K562 (cell line): ENCODE measurements at regions of chr19 and their contacts with region 1.

Region 1: GRCh38 chr19:52962394-52963246 is at the start of gene ZNF816:
- DNase-seq: peak; percentile 98
- ATAC-seq: peak; percentile 100
- H3K4me3 ChIP-seq: peak within 1 kb of the TSS; percentile 63
- H3K27ac ChIP-seq: peak within 1 kb of the TSS; percentile 61
- H3K4me1 ChIP-seq: peaks cover 7 to 13% of the 10 kb centered on the region in 2 experiments
- H3K27me3 ChIP-seq: no peaks in the 10 kb centered on the region
- CTCF ChIP-seq: no peak
- EP300 ChIP-seq: no peak
- POLR2A ChIP-seq: peak; percentile 86
- RAD21 ChIP-seq: no peak
- polyA plus RNA-seq, gene ZNF816: 11.1 to 17.0 TPM

Region 2: DNA sequence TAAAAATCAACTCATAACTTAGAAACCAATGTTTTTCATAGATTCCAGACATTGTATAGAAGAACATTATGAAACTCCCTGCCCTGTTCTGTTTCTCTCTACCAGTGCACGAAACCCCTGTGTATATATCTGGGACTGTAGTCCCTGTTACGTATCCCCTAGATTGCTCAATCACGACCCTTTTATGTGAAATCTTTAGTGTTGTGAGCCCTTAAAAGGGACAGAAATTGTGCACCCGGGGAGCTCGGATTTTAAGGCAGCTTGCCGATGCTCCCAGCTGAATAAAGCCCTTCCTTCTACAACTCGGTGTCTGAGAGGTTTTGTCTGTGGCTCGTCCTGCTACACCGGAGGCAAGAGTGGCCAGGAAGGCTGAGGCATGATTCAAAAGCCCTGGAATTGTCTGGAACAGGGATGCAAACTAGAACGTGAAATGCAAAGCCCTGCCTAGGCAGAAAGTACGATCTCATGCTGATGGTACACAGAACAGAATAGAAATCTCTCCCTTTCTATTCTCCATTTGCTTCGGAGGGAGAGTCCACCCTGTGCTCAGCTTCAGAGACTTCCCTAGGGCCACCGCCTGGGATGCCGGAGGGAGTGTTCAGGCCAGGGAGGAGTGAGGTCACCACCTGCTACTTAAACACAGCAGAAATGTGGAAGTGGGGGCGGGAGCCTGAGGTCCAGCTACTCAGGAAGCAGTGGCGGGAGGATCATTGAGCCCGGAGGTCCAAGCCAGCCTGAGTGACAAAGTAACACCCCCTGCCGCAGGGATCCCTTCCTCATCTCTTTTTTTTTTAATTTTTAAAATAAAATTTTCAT is 38.6 kb before region 1 on chr19:
- CTCF ChIA-PET with region 1: no interaction called
- POLR2A ChIA-PET with region 1: no interaction called
- in situ Hi-C with region 1: no loop called
- intact Hi-C with region 1: loop called (anchors 2 kb)
- DNase-seq: peak; percentile 37 to 89 (median 44)
- ATAC-seq: peak; percentile 75
- H3K4me3 ChIP-seq: peak overlapping the region; percentile 66; the same call in 1 of the 2 replicates
- H3K27ac ChIP-seq: peak overlapping the region; percentile 98
- H3K4me1 ChIP-seq: peaks cover 11 to 13% of the 10 kb centered on the region in 2 experiments; a peak in 3 of 5 replicates
- H3K27me3 ChIP-seq: no peaks in the 10 kb centered on the region
- CTCF ChIP-seq: 0 out of 6 replicates have a peak, but pooled peaks of 1 of the 3 experiments have one; percentile 1
- EP300 ChIP-seq: no peak
- POLR2A ChIP-seq: peak; percentile 47; the same call in 1 of the 2 replicates
- RAD21 ChIP-seq: peak in 1 of 2 experiments; percentile 12; a peak in 1 of 4 replicates

Region 3: GRCh38 chr19:52948025-52948770 is 14.4 kb before region 1 on chr19:
- CTCF ChIA-PET with region 1: no interaction called
- POLR2A ChIA-PET with region 1: no interaction called
- in situ Hi-C with region 1: no loop called
- intact Hi-C with region 1: no loop called
- DNase-seq: no peak
- ATAC-seq: no peak
- H3K4me3 ChIP-seq: no peak overlapping the region
- H3K27ac ChIP-seq: no peak overlapping the region
- H3K4me1 ChIP-seq: 0 out of 5 replicates have a peak, but pooled peaks cover 0 to 4% of the 10 kb centered on the region in 2 experiments
- H3K27me3 ChIP-seq: no peaks in the 10 kb centered on the region
- CTCF ChIP-seq: no peak
- EP300 ChIP-seq: no peak
- POLR2A ChIP-seq: no peak
- RAD21 ChIP-seq: no peak